ENCODE measurements at regions of chr1 and their contacts with region 1.

Region 1: GRCh38 chr1:8848663-8849386 is 29.7 kb downstream of the ENO1 start:
- DNase-seq: peak; percentile 96
- ATAC-seq: peak; percentile 99

Region 2: DNA sequence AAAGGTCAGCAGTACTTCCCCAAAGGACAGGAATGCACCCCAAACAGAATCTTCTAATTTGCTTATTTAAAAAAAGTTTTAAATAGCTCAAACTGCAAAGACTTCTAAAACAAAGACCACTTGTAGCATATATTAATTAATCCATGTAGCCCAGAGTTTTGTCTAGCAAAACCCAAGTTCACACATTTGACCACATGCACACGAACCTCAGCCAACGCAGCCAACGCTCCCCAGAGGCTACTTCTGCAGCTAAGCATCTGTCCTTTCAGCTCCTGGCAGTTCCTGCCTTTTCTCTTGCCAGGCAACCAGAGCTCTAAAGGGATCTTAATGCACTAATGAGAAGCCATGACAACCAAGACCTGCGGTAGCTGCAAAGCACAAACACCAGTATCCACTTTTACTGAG is 121.0 kb before region 1 on chr1:
- intact Hi-C with region 1: loop called (anchors 10 kb)
- DNase-seq: peak; percentile 71
- ATAC-seq: peak; percentile 86

Region 3: GRCh38 chr1:8809342-8809736 is 39.5 kb before region 1 on chr1:
- intact Hi-C with region 1: no loop called
- DNase-seq: no peak
- ATAC-seq: no peak